ENCODE measurements at regions of chr3 and their contacts with region 1.

Region 1: GRCh38 chr3:167406875-167407492 is 26.9 kb upstream of the ZBBX start:
- DNase-seq: peak; percentile 58
- ATAC-seq: peak; percentile 99
- H3K4me3 ChIP-seq: no peak overlapping the region
- H3K27ac ChIP-seq: no peak overlapping the region
- H3K4me1 ChIP-seq: no peaks in the 10 kb centered on the region
- H3K27me3 ChIP-seq: no peaks in the 10 kb centered on the region
- CTCF ChIP-seq: peak; percentile 58 to 81 (median 79)
- POLR2A ChIP-seq: no peak
- RAD21 ChIP-seq: peak; percentile 88

Region 2: GRCh38 chr3:167684388-167684993 is 277.5 kb after region 1 on chr3:
- CTCF ChIA-PET with region 1: interaction called, 8 read pairs
- POLR2A ChIA-PET with region 1: no interaction called
- RAD21 ChIA-PET with region 1: no interaction called
- intact Hi-C with region 1: loop called (anchors 1 kb)
- DNase-seq: peak; percentile 46
- ATAC-seq: peak; percentile 73
- H3K4me3 ChIP-seq: no peak overlapping the region
- H3K27ac ChIP-seq: no peak overlapping the region
- H3K4me1 ChIP-seq: no peaks in the 10 kb centered on the region
- H3K27me3 ChIP-seq: no peaks in the 10 kb centered on the region
- CTCF ChIP-seq: peak; percentile 28 to 74 (median 53); a peak in 5 of 6 replicates
- POLR2A ChIP-seq: no peak
- RAD21 ChIP-seq: peak; percentile 48

Region 3: DNA sequence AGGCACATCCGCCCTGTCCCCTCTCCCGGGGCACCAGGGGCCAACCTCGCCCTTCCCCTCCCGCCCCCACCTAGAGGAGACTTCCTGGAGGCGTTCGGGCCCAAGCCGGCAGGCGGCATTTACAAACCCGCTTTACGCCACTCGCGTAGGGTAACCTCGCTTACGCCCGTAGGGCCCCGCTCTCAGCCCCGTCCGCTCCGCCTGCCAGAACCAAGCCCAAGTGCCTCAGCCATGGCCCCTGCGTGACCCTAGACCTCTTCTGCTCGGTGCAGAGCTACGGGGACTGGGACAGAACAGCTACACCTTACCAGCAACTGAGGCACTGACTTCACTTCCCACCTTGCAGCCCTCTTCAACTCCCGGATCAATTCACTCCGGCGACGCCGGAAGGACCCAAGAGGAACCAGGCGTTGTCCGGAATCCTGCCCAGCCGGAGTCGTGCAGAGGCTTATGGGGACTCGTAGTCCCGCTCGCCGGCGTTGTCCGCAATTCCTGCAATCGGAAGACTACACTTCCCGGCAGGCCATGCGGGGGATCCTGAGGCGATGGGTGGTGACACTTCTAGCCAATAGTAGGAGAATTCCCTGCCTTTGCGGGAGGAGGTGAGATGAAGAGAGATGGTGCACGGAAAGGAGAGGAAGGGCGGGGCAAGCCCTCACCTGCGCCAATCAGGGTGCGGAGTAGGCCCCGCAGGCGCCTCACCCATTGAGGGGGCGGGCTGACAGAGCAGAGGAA is 327.7 kb after region 1 on chr3 and contains the start of gene PDCD10:
- CTCF ChIA-PET with region 1: no interaction called
- POLR2A ChIA-PET with region 1: no interaction called
- RAD21 ChIA-PET with region 1: no interaction called
- intact Hi-C with region 1: loop called (anchors 2 kb)
- DNase-seq: peak; percentile 98
- ATAC-seq: peak; percentile 88
- H3K4me3 ChIP-seq: peak within 1 kb of the TSS; percentile 87 to 91
- H3K27ac ChIP-seq: peak within 1 kb of the TSS; percentile 84
- H3K4me1 ChIP-seq: peaks cover 5 to 16% of the 10 kb centered on the region in 2 experiments; a peak in 3 of 4 replicates
- H3K27me3 ChIP-seq: no peaks in the 10 kb centered on the region
- CTCF ChIP-seq: no peak
- POLR2A ChIP-seq: peak; percentile 75
- RAD21 ChIP-seq: no peak
- total RNA-seq, gene PDCD10: 59.0 TPM

Region 4: GRCh38 chr3:168071591-168072322 is 664.8 kb after region 1 on chr3:
- CTCF ChIA-PET with region 1: no interaction called
- POLR2A ChIA-PET with region 1: no interaction called
- RAD21 ChIA-PET with region 1: no interaction called
- intact Hi-C with region 1: no loop called
- DNase-seq: peak; percentile 70
- ATAC-seq: peak; percentile 88
- H3K4me3 ChIP-seq: peak overlapping the region in 1 of 2 experiments; percentile 30; a peak in 2 of 4 replicates
- H3K27ac ChIP-seq: peak overlapping the region; percentile 66; the same call in 1 of the 2 replicates
- H3K4me1 ChIP-seq: peaks cover 18 to 37% of the 10 kb centered on the region in 2 experiments
- H3K27me3 ChIP-seq: no peaks in the 10 kb centered on the region
- CTCF ChIP-seq: no peak
- POLR2A ChIP-seq: no peak
- RAD21 ChIP-seq: no peak